ENCODE measurements at regions of chr13 and their contacts with region 1.

Region 1: DNA sequence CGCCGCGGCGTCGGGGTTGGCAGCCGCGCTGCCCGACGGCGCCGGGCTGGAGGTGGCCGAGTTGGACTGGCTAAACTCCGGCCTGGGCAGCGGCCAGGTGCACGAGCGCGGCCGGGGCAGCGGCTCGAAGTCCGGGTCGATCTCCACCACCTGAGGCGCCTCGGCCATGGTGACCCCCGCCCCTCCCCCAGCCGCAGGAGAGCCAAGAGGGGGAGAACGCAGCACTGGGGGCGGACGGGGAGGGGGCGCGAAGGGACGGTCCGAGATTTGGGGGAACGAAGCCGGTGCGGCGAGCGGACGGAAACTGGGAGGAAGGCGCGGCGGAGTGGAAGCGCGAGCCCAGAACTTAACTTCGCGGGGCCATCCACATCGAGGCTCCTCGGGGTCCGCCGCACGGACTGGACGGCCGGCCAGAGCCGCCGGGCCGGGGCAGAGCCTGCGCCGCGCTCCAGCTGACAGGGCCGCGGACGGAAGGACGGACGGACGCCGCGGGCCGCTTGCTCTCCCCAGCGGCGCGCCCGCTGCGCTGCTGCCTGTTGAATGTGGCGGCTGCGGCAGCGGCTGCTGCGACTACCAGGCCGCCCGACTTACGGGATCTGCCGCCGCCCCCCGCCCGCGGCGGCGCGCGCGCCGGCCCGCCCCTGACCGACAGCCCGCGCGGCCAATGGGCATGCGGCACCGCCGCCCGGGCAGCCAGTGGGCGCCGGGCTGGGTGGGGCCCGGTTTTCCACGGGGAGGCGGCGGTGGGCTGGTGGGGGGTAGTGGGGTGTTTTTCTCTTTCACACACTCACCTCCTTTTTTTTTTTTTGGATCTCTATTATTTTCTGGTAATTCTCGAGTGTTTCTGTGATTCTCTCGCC is at the start of gene FOXO1:
- DNase-seq: peak; percentile 94
- H3K4me3 ChIP-seq: peak within 1 kb of the TSS; percentile 95
- H3K27ac ChIP-seq: peak within 1 kb of the TSS; percentile 99
- H3K4me1 ChIP-seq: peaks cover 70% of the 10 kb centered on the region
- H3K27me3 ChIP-seq: no peaks in the 10 kb centered on the region
- CTCF ChIP-seq: no peak
- total RNA-seq, gene FOXO1: 13.2 TPM

Region 2: DNA sequence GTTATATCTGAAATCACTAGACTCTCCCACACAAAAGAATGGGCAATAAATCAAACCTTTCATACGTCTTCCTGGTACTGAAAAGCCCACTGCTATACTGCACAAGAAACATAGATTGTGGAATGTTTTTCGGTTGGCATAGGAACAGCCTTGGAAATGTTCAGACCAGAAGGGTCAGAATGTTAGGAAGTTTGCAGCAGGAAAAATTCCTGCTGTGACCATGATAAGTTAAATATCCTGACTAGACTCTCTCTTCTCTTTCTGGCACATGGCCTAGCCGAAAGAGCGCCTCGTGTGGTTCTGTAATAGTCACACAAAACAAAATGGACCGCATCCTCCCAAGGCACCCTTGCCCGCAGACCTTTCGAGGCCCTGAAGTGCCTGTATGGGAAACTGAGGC is 583.6 kb before region 1 on chr13:
- intact Hi-C with region 1: no loop called
- DNase-seq: no peak
- H3K4me3 ChIP-seq: no peak overlapping the region
- H3K27ac ChIP-seq: no peak overlapping the region
- H3K4me1 ChIP-seq: no peaks in the 10 kb centered on the region
- H3K27me3 ChIP-seq: no peaks in the 10 kb centered on the region
- CTCF ChIP-seq: no peak

Region 3: DNA sequence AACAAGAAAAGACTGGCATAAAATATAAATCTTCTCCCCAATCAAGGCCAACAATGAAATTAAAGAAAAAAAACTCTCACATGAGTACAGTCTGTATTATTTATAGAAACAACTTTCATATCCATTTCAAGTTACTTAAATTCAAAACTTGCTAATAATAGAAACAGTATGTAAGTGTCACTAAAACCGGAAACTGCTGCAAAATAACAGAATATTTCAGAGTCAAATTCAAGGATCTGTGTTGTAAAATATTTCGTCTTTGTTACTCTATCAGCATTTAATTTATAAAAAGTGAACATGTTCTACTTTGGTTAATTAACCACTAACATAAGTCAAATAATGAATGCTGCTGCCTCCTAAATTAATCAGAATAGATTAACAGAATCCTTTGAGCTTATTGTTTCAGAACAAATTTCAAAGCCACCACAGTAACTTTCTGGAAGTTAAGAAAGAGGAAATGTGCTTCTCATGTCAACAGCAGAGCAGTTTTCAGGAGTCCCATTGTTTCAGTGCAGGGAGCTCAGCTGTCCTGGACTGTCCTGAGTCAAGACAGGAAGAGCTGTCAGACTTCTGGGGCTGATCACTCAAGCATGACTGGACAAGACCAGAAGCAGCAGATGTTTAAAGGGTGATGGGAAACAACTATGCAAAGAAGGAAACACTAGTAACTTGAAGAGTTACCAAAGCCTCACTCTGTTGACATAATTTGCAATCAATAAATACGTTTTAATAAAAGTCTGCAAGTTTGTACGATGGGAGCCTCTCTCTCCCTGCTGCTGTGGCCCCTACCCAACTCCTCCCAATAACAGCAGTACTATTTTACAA is 76.8 kb before region 1 on chr13:
- intact Hi-C with region 1: loop called (anchors 10 kb)
- DNase-seq: no peak
- H3K4me3 ChIP-seq: peak overlapping the region; percentile 15
- H3K27ac ChIP-seq: peak overlapping the region; percentile 75
- H3K4me1 ChIP-seq: peaks cover 100% of the 10 kb centered on the region
- H3K27me3 ChIP-seq: no peaks in the 10 kb centered on the region
- CTCF ChIP-seq: no peak